GM12878 (cell line): ENCODE measurements at regions of chr3 and their contacts with region 1.

Region 1: DNA sequence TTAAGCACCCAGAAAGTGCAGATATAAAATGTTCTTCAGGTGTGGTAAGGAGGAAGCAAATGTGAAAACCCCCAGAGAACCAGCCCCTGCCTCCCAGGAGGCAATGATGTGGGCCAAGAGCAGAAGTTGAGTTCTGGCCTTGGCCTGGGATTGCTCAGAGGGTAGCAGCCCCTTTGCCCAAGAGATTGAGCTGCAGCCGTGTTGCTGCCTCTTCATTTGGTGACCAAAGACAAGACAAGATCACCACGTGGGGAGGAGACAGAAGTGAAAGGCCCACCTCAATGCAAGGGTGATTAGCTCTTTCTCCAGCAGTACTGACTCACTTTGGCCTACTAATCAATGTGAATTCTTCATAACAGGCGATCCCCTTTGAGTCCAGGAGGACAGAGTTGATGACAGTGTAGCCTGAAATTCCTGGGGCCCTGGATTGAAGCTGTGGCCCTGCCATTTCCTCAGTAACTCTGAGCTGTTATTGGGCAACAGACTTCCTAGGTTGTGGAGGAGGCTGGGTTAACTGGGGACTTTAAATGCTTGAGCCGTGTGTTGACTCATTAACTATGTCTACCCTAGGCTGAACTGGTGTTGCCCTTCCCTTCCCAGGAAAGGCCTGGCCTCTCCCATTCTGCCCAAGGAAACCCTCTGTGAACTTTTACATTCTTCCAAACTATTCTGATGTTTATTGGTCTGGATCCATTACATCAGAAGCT is 86.5 kb downstream of the ST6GAL1 start:
- DNase-seq: no peak
- ATAC-seq: peak; percentile 68
- H3K4me3 ChIP-seq: peak overlapping the region; percentile 11; the same call in 1 of the 2 replicates
- H3K27ac ChIP-seq: peak overlapping the region; percentile 72
- H3K4me1 ChIP-seq: peaks cover 80% of the 10 kb centered on the region
- H3K27me3 ChIP-seq: no peaks in the 10 kb centered on the region
- CTCF ChIP-seq: no peak
- EP300 ChIP-seq: no peak
- POLR2A ChIP-seq: peak; percentile 46; the same call in 1 of the 2 replicates
- RAD21 ChIP-seq: no peak

Region 2: GRCh38 chr3:186985661-186986364 is 31.0 kb before region 1 on chr3:
- CTCF ChIA-PET with region 1: interaction called, 3 read pairs
- POLR2A ChIA-PET with region 1: interaction called, 13 read pairs
- RAD21 ChIA-PET with region 1: interaction called, 15 read pairs
- SMC1A ChIA-PET with region 1: interaction called, 4 read pairs
- in situ Hi-C with region 1: no loop called
- intact Hi-C with region 1: no loop called
- DNase-seq: peak; percentile 56
- ATAC-seq: peak; percentile 38
- H3K4me3 ChIP-seq: no peak overlapping the region; the same call in 1 of the 2 replicates
- H3K27ac ChIP-seq: peak overlapping the region; percentile 82
- H3K4me1 ChIP-seq: peaks cover 43% of the 10 kb centered on the region
- H3K27me3 ChIP-seq: no peaks in the 10 kb centered on the region
- CTCF ChIP-seq: no peak
- EP300 ChIP-seq: no peak
- POLR2A ChIP-seq: no peak
- RAD21 ChIP-seq: no peak

Region 3: DNA sequence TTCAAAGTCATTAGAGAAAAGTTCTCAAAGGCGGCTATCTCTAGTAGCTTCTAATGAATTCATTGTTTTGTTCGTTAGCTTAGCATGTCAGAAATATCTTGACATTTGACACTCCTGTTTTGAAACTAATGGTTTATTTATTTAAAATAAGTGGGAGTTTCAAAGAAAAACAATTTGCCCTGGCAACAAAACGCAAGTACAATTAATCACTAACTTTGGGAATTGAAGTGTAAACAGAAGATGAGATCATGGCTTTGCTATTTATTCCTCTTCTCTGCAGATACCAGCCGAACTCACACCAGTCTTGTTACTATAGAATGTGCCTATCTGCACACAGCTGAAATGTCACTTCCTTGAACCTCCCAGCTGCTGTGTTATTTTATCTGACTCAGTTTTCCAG is 247.2 kb after region 1 on chr3:
- CTCF ChIA-PET with region 1: no interaction called
- POLR2A ChIA-PET with region 1: no interaction called
- RAD21 ChIA-PET with region 1: no interaction called
- SMC1A ChIA-PET with region 1: no interaction called
- in situ Hi-C with region 1: no loop called
- intact Hi-C with region 1: no loop called
- DNase-seq: no peak
- ATAC-seq: no peak
- H3K4me3 ChIP-seq: no peak overlapping the region
- H3K27ac ChIP-seq: no peak overlapping the region
- H3K4me1 ChIP-seq: no peaks in the 10 kb centered on the region
- H3K27me3 ChIP-seq: peaks cover 0 to 2% of the 10 kb centered on the region in 2 experiments
- CTCF ChIP-seq: no peak
- EP300 ChIP-seq: no peak
- POLR2A ChIP-seq: no peak
- RAD21 ChIP-seq: no peak